ENCODE measurements at regions of chr5 and their contacts with region 1.

Region 1: GRCh38 chr5:134813407-134813806 is 32.4 kb upstream of the C5orf24 start:
- DNase-seq: no peak
- ATAC-seq: no peak
- H3K4me3 ChIP-seq: no peak overlapping the region
- H3K27ac ChIP-seq: no peak overlapping the region
- H3K4me1 ChIP-seq: no peaks in the 10 kb centered on the region
- H3K27me3 ChIP-seq: no peaks in the 10 kb centered on the region
- CTCF ChIP-seq: no peak

Region 2: GRCh38 chr5:134794082-134794481 is 19.3 kb before region 1 on chr5:
- CTCF ChIA-PET with region 1: no interaction called
- POLR2A ChIA-PET with region 1: interaction called, 11 read pairs
- intact Hi-C with region 1: no loop called
- DNase-seq: no peak
- ATAC-seq: no peak
- H3K4me3 ChIP-seq: no peak overlapping the region
- H3K27ac ChIP-seq: no peak overlapping the region
- H3K4me1 ChIP-seq: no peaks in the 10 kb centered on the region
- H3K27me3 ChIP-seq: no peaks in the 10 kb centered on the region
- CTCF ChIP-seq: no peak

Region 3: DNA sequence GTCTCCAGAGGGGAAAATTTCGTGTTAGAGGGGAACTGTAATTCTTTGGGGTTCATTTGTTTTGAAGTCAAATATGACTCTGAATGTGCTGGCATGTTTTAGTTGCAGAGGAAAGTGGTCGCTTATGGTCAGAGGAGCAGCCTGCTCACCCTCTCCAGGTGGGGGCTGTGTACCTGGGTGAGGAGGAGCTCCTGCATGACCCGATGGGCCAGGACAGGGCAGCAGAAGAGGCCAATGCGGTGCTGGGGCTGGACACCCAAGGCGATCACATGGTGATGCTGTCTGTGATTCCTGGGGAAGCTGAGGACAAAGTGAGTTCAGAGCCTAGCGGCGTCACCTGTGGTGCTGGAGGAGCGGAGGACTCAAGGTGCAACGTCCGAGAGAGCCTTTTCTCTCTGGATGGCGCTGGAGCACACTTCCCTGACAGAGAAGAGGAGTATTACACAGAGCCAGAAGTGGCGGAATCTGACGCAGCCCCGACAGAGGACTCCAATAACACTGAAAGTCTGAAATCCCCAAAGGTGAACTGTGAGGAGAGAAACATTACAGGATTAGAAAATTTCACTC is 74.3 kb after region 1 on chr5:
- CTCF ChIA-PET with region 1: no interaction called
- POLR2A ChIA-PET with region 1: no interaction called
- intact Hi-C with region 1: no loop called
- DNase-seq: no peak
- ATAC-seq: no peak
- H3K4me3 ChIP-seq: no peak overlapping the region
- H3K27ac ChIP-seq: no peak overlapping the region
- H3K4me1 ChIP-seq: no peaks in the 10 kb centered on the region
- H3K27me3 ChIP-seq: no peaks in the 10 kb centered on the region
- CTCF ChIP-seq: no peak

Region 4: DNA sequence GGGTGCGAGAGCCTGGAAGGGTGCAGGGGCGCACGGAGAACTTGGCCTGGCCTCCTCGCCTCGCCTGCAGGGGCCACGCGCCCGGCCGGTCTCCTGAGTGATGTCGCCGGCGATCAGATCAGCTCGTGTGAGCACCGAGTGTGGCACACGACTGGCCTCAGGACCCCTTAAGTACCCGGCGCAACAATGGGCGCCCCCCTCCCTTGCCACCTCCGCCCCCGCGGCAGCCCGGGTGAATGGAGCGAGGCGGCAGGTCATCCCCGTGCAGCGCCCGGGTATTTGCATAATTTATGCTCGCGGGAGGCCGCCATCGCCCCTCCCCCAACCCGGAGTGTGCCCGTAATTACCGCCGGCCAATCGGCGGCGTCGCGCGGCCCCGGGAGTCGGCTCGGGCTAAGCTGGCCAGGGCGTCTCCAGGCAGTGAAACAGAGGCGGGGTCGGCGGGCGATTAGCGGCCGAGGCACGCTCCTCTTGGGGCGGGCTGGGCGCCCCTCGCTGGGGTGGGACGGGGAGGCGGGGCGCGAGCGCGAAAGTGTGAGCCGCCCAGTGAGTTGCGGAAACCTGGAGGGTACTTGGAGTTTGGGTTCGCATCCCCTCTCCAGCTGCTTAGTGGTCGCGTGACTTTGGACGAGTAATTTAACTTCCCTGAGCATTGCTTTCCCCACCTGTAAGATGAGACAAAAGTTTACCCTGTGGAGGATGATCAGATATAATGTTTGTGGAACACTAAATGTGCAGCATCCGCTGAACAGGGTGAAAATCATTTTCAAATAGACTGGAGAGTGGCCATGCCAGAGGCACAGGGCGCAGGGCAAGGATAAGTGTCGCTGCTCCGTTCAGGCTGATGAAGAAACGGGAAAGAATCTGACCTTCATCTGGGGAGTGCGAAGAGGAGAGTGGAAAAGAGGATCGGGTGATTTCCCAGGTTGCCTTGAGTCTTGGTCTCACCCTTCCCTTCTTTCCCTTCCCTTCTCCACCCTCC is 722.7 kb after region 1 on chr5 and contains the start of gene NEUROG1:
- CTCF ChIA-PET with region 1: no interaction called
- POLR2A ChIA-PET with region 1: no interaction called
- intact Hi-C with region 1: no loop called
- DNase-seq: no peak
- ATAC-seq: no peak
- H3K4me3 ChIP-seq: no peak within 1 kb of the TSS
- H3K27ac ChIP-seq: no peak within 1 kb of the TSS
- H3K4me1 ChIP-seq: no peaks in the 10 kb centered on the region
- H3K27me3 ChIP-seq: peaks cover 42% of the 10 kb centered on the region
- CTCF ChIP-seq: no peak
- total RNA-seq, gene NEUROG1: not detected in 2 replicates

Measured in PC-3 (cell line).